Posterior vena cava (tissue), 2 donors: ENCODE measurements at regions of chr10 and their contacts with region 1.

Region 1: DNA sequence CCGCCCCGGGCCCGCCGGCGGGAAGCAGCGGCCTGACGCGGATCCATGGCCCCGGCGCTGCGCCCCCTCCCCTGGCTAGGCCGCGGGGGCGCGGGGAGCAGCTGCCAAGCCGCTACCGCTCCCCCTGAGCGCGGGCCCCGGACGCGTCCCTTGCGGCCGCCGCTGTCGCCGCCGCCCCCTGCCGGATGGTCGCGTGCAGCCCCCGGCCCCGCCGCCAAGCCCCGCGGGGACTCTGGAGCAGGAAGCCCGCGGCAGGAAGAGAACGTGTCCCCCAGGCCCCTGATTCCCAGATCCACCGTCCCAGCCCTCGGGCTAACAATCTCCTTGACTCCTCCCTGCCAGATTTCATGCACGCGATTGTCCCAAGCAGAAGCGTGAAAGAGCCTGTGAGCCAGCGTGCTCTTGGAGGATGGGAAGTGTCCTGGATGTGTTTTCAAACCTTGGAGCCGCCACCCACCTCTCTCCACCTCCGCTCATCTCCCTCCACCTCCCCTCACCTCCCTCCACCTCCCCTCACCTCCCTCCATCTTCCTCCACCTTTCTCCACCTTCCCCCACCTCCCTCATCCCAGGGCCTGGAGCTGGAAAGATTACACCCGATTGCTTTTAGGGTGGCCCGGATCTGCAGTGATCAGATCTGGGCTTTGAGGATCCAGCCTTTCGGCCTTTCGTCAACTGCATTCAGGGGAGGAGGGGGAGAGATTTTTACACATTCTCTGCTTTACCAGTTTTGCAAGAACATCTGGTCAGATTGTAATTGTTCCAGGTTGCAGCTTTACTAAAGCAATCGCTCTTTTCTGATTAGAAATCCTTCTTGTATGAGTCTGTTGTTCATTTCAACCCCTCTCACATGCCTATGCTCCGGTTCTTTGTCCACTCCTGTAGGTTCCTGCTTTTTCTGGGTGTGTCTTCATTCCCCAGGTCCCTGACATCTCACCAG is 570 bp upstream of the PRTFDC1 start:
- DNase-seq: peak; percentile 82

Region 2: GRCh38 chr10:24901686-24902399 is 51.1 kb before region 1 on chr10:
- intact Hi-C with region 1: loop called in 1 of 2 experiments (anchors 10 kb)
- DNase-seq: no peak

Region 3: DNA sequence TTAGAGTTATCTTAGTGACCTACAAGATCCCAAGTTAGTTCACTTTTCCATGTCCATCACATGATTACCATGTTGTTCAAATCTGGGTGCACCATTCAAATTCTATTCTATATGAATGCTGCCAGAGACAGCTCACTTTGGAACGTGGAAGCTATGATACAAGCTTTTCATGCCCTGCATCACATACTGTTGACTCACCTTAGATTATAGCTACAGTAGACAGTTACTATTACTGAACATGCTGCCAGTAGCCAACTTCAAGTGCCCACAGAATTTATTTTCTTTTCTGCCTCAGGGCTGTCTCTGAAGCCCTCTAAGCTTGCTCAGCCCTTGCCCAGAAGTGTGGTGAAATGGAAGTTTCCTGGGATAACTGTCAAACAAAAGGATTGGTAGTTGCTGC is 452.9 kb after region 1 on chr10:
- intact Hi-C with region 1: no loop called
- DNase-seq: no peak